ENCODE measurements at regions of chr3 and their contacts with region 1.

Region 1: DNA sequence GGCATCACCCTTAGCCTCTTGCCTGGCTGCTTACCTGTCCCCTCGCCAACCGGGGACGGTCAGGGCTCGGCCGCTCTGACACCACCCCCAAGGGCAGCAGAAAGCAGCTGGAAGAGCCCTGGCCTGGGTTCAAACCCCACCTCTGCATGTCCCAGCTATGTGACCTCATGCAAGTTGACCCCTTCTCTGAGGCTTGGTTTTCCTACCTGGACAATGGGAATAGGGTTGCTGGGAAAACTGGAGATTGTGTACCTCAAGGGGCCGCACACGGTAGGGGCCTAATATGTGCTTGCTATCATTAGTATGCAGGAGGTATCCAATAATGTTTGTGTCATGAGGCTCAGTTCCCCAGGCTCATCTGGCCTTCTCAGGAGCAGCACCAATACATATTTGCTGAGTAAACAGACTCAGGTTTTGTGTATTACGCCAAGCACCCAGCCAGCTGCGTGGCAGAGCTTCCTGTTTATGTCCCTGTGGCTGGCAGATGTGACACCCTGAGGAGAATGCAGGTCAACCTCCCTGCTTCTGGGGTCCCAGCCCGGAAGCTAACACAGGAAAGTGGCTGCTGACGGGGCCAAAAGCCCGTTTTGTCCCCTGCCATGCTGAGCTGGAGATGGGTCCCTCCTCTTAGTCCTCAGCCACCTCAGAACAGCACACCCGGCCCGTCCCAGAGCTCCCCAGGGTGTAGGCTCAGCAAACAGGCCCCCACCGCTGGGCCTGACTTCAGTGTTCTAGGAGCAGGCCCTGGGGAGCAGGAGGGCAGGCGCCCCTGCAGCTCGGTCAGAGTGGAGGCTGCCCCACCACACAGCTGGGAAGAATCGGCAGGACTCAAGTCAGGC is 29.7 kb downstream of the PLXND1 start:
- DNase-seq: peak; percentile 59 to 91 (median 66)
- ATAC-seq: peak; percentile 90
- H3K4me3 ChIP-seq: peak overlapping the region; percentile 0
- H3K4me3 Mint-ChIP-seq: peak overlapping the region; percentile 63
- H3K27ac ChIP-seq: peak overlapping the region in 1 of 2 donors; percentile 62
- H3K27ac Mint-ChIP-seq: peak overlapping the region; percentile 97
- H3K4me1 ChIP-seq: peaks cover 57% of the 10 kb centered on the region
- H3K4me1 Mint-ChIP-seq: peaks cover 26% of the 10 kb centered on the region
- H3K27me3 ChIP-seq: no peaks in the 10 kb centered on the region
- H3K27me3 Mint-ChIP-seq: no peaks in the 10 kb centered on the region
- CTCF ChIP-seq: no peak

Region 2: GRCh38 chr3:128343287-128344051 is 1233.3 kb before region 1 on chr3:
- CTCF ChIA-PET with region 1: no interaction called
- POLR2A ChIA-PET with region 1: no interaction called
- intact Hi-C with region 1: no loop called
- DNase-seq: no peak
- ATAC-seq: no peak
- H3K4me3 ChIP-seq: no peak overlapping the region
- H3K4me3 Mint-ChIP-seq: no peak overlapping the region
- H3K27ac ChIP-seq: no peak overlapping the region
- H3K27ac Mint-ChIP-seq: no peak overlapping the region
- H3K4me1 ChIP-seq: no peaks in the 10 kb centered on the region
- H3K4me1 Mint-ChIP-seq: peaks cover 7% of the 10 kb centered on the region
- H3K27me3 ChIP-seq: no peaks in the 10 kb centered on the region
- H3K27me3 Mint-ChIP-seq: no peaks in the 10 kb centered on the region
- CTCF ChIP-seq: no peak

Region 3: GRCh38 chr3:129543156-129543790 is 33.5 kb before region 1 on chr3 and contains the start of gene H1-8:
- CTCF ChIA-PET with region 1: no interaction called
- POLR2A ChIA-PET with region 1: interaction called, 11 read pairs
- intact Hi-C with region 1: no loop called
- DNase-seq: no peak
- ATAC-seq: no peak
- H3K4me3 ChIP-seq: no peak within 1 kb of the TSS
- H3K4me3 Mint-ChIP-seq: no peak within 1 kb of the TSS
- H3K27ac ChIP-seq: no peak within 1 kb of the TSS
- H3K27ac Mint-ChIP-seq: no peak within 1 kb of the TSS
- H3K4me1 ChIP-seq: no peaks in the 10 kb centered on the region
- H3K4me1 Mint-ChIP-seq: no peaks in the 10 kb centered on the region
- H3K27me3 ChIP-seq: no peaks in the 10 kb centered on the region
- H3K27me3 Mint-ChIP-seq: no peaks in the 10 kb centered on the region
- CTCF ChIP-seq: no peak
- total RNA-seq, gene H1-8: not detected

Region 4: GRCh38 chr3:129553719-129554118 is 23.0 kb before region 1 on chr3:
- CTCF ChIA-PET with region 1: no interaction called
- POLR2A ChIA-PET with region 1: interaction called, 15 read pairs
- intact Hi-C with region 1: no loop called
- DNase-seq: peak in 5 of 14 experiments; percentile 13 to 57 (median 22)
- ATAC-seq: peak; percentile 61
- H3K4me3 ChIP-seq: no peak overlapping the region
- H3K4me3 Mint-ChIP-seq: peak overlapping the region; percentile 40
- H3K27ac ChIP-seq: no peak overlapping the region
- H3K27ac Mint-ChIP-seq: no peak overlapping the region
- H3K4me1 ChIP-seq: peaks cover 22% of the 10 kb centered on the region
- H3K4me1 Mint-ChIP-seq: peaks cover 16% of the 10 kb centered on the region
- H3K27me3 ChIP-seq: no peaks in the 10 kb centered on the region
- H3K27me3 Mint-ChIP-seq: no peaks in the 10 kb centered on the region
- CTCF ChIP-seq: no peak

Region 5: GRCh38 chr3:129593595-129594339 is 17.0 kb after region 1 on chr3:
- CTCF ChIA-PET with region 1: no interaction called
- POLR2A ChIA-PET with region 1: interaction called, 31 read pairs
- intact Hi-C with region 1: no loop called
- DNase-seq: peak in 13 of 14 experiments; percentile 27 to 82 (median 51)
- ATAC-seq: peak; percentile 71
- H3K4me3 ChIP-seq: peak overlapping the region; percentile 25
- H3K4me3 Mint-ChIP-seq: peak overlapping the region; percentile 73
- H3K27ac ChIP-seq: no peak overlapping the region
- H3K27ac Mint-ChIP-seq: peak overlapping the region; percentile 53
- H3K4me1 ChIP-seq: peaks cover 43% of the 10 kb centered on the region
- H3K4me1 Mint-ChIP-seq: peaks cover 40% of the 10 kb centered on the region
- H3K27me3 ChIP-seq: no peaks in the 10 kb centered on the region
- H3K27me3 Mint-ChIP-seq: no peaks in the 10 kb centered on the region
- CTCF ChIP-seq: no peak

Region 6: DNA sequence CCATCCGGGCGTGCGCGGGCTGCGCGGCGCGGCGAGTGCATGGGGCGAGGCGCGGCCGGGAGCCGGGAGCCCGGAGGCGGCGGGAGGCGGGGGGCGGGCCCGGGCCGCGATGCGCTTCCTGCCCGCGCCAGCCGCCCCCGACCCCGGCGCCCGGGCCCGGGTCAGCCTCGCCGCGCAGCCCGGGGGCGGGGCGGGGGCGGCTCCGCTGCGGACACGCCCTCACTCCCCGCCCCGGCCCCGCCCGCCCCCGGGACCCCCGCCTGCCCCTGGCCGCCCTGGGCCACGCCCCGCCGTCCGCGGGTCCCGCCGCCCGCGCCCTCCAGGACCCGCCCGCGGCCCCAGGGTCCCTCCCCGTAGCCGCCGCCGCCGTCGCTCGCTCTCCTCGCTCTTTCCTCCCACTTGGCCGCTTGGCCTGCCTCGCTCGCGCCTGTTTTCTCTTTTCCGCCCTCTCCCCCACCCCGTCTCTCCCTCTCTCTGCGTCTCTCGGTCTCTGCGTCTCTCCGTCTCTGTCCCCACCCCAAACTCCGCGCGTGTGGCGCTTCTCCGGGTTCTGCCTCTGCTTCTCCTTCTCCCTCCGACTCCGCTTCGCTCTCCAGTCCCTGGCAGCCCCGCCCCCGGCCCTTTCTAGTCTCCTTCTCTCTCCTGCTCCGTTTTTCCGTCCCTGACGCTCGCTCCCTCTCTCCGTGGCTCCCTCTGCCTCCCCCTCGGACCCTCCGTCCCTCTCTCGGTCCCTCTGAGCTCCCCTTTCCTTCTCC is 30.1 kb after region 1 on chr3 and contains the start of gene PLXND1:
- CTCF ChIA-PET with region 1: interaction called, 4 read pairs
- POLR2A ChIA-PET with region 1: interaction called, 45 read pairs
- intact Hi-C with region 1: no loop called
- DNase-seq: peak in 11 of 14 experiments; percentile 10 to 79 (median 46)
- ATAC-seq: peak; percentile 53
- H3K4me3 ChIP-seq: peak within 1 kb of the TSS; percentile 61
- H3K4me3 Mint-ChIP-seq: peak within 1 kb of the TSS; percentile 95
- H3K27ac ChIP-seq: no peak within 1 kb of the TSS
- H3K27ac Mint-ChIP-seq: peak within 1 kb of the TSS; percentile 67
- H3K4me1 ChIP-seq: peaks cover 51% of the 10 kb centered on the region
- H3K4me1 Mint-ChIP-seq: peaks cover 33% of the 10 kb centered on the region
- H3K27me3 ChIP-seq: peaks cover 0 to 5% of the 10 kb centered on the region in 2 experiments
- H3K27me3 Mint-ChIP-seq: peaks cover 20% of the 10 kb centered on the region
- CTCF ChIP-seq: no peak
- total RNA-seq, gene PLXND1: 61.7 to 62.5 TPM